ENCODE measurements at regions of chr12 and their contacts with region 1.

Region 1: GRCh38 chr12:6688999-6689882 is at the start of gene ZNF384:
- DNase-seq: peak; percentile 94 to 98 (median 95)
- H3K4me3 ChIP-seq: peak within 1 kb of the TSS; percentile 61
- H3K4me3 Mint-ChIP-seq: peak within 1 kb of the TSS; percentile 85 to 96 (median 94)
- H3K27ac ChIP-seq: peak within 1 kb of the TSS; percentile 82
- H3K27ac Mint-ChIP-seq: peak within 1 kb of the TSS; percentile 92 to 99 (median 99)
- H3K4me1 ChIP-seq: peaks cover 36% of the 10 kb centered on the region
- H3K4me1 Mint-ChIP-seq: peaks cover 50 to 63% (median 55%) of the 10 kb centered on the region in 3 donors
- H3K27me3 ChIP-seq: no peaks in the 10 kb centered on the region
- H3K27me3 Mint-ChIP-seq: peaks cover 0 to 1% of the 10 kb centered on the region in 2 donors
- total RNA-seq, gene ZNF384: 58.1 to 63.3 TPM

Region 2: GRCh38 chr12:6620137-6620884 is 68.9 kb before region 1 on chr12:
- CTCF ChIA-PET with region 1: interaction called, 4 read pairs
- POLR2A ChIA-PET with region 1: interaction called, 11 read pairs
- DNase-seq: peak in 2 of 5 donors; percentile 50 to 62
- H3K4me3 ChIP-seq: no peak overlapping the region
- H3K4me3 Mint-ChIP-seq: peak overlapping the region in 3 of 7 donors; percentile 27 to 71 (median 55)
- H3K27ac ChIP-seq: no peak overlapping the region
- H3K27ac Mint-ChIP-seq: peak overlapping the region in 4 of 8 donors; percentile 46 to 85 (median 77)
- H3K4me1 ChIP-seq: no peaks in the 10 kb centered on the region
- H3K4me1 Mint-ChIP-seq: peaks cover 6 to 38% (median 18%) of the 10 kb centered on the region in 3 donors
- H3K27me3 ChIP-seq: no peaks in the 10 kb centered on the region
- H3K27me3 Mint-ChIP-seq: no peaks in the 10 kb centered on the region

Region 3: DNA sequence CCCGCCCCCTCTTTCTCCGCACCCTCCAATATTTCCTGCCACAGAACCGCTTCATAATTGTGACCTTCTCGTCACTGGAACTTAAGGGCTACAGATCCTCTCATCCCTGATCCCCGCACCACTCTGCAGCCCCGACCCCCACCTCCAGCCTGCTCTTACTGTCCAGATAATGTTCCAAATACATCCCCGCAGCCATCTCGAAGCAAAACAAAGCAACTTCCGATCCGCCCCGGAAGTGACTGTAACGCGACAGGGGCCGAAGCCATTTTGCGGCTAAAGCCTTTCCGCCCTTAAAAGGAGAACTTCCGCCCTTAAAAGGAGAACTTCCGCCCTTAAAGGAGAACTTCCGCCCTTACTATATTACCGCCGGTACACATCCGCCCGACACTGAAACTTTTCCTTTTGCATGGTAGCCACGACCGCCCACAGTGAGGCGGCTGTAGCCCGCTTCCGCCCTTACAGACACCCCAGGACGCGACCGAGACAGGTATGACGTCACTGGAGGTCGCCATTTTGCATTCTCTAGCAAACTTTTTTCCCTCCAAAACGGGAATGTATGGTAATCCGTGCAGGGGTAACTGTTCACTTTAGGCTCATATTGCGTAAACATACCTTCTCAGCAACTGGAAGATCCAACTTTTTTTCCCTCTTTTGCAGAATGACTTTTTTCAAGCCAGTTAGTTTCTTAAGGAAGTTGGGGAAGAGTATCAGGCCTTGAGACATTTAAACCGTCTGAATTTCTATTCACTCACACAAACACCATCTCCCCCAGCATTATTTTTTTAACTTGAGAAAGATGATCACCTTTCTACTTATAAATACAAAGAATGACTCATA is 26.1 kb before region 1 on chr12 and contains the start of gene ING4:
- CTCF ChIA-PET with region 1: interaction called, 8 read pairs
- POLR2A ChIA-PET with region 1: interaction called, 16 read pairs
- DNase-seq: peak; percentile 91 to 99 (median 97)
- H3K4me3 ChIP-seq: peak within 1 kb of the TSS; percentile 76
- H3K4me3 Mint-ChIP-seq: peak within 1 kb of the TSS; percentile 90 to 98 (median 95)
- H3K27ac ChIP-seq: peak within 1 kb of the TSS; percentile 83
- H3K27ac Mint-ChIP-seq: peak within 1 kb of the TSS; percentile 88 to 99 (median 98)
- H3K4me1 ChIP-seq: peaks cover 20% of the 10 kb centered on the region
- H3K4me1 Mint-ChIP-seq: peaks cover 27 to 42% (median 34%) of the 10 kb centered on the region in 3 donors
- H3K27me3 ChIP-seq: no peaks in the 10 kb centered on the region
- H3K27me3 Mint-ChIP-seq: no peaks in the 10 kb centered on the region
- total RNA-seq, gene ING4: 17.4 to 18.5 TPM

Region 4: GRCh38 chr12:6708960-6709394 is 19.7 kb after region 1 on chr12:
- CTCF ChIA-PET with region 1: no interaction called
- POLR2A ChIA-PET with region 1: no interaction called
- DNase-seq: peak in 3 of 5 donors; percentile 7 to 64 (median 50)
- H3K4me3 ChIP-seq: no peak overlapping the region
- H3K4me3 Mint-ChIP-seq: peak overlapping the region; percentile 75 to 94 (median 80)
- H3K27ac ChIP-seq: no peak overlapping the region
- H3K27ac Mint-ChIP-seq: peak overlapping the region; percentile 12 to 96 (median 80)
- H3K4me1 ChIP-seq: no peaks in the 10 kb centered on the region
- H3K4me1 Mint-ChIP-seq: peaks cover 7 to 10% (median 8%) of the 10 kb centered on the region in 3 donors
- H3K27me3 ChIP-seq: no peaks in the 10 kb centered on the region
- H3K27me3 Mint-ChIP-seq: peaks cover 25 to 27% of the 10 kb centered on the region in 2 donors

Region 5: GRCh38 chr12:6752921-6753771 is 63.9 kb after region 1 on chr12 and contains the start of gene MLF2:
- CTCF ChIA-PET with region 1: interaction called, 7 read pairs
- POLR2A ChIA-PET with region 1: interaction called, 16 read pairs
- DNase-seq: peak; percentile 96 to 98 (median 97)
- H3K4me3 ChIP-seq: peak within 1 kb of the TSS; percentile 99
- H3K4me3 Mint-ChIP-seq: peak within 1 kb of the TSS; percentile 96 to 99 (median 97)
- H3K27ac ChIP-seq: peak within 1 kb of the TSS; percentile 98
- H3K27ac Mint-ChIP-seq: peak within 1 kb of the TSS; percentile 98 to 100 (median 99)
- H3K4me1 ChIP-seq: peaks cover 22% of the 10 kb centered on the region
- H3K4me1 Mint-ChIP-seq: peaks cover 24 to 30% (median 29%) of the 10 kb centered on the region in 3 donors
- H3K27me3 ChIP-seq: no peaks in the 10 kb centered on the region
- H3K27me3 Mint-ChIP-seq: no peaks in the 10 kb centered on the region
- total RNA-seq, gene MLF2: 141 to 146 TPM

Region 6: GRCh38 chr12:6851921-6852650 is 162.8 kb after region 1 on chr12 and contains the start of gene USP5:
- CTCF ChIA-PET with region 1: interaction called, 4 read pairs
- POLR2A ChIA-PET with region 1: interaction called, 20 read pairs
- DNase-seq: peak; percentile 97 to 99 (median 99)
- H3K4me3 ChIP-seq: peak within 1 kb of the TSS; percentile 97
- H3K4me3 Mint-ChIP-seq: peak within 1 kb of the TSS; percentile 86 to 99 (median 94)
- H3K27ac ChIP-seq: peak within 1 kb of the TSS; percentile 77
- H3K27ac Mint-ChIP-seq: peak within 1 kb of the TSS; percentile 99 to 100 (median 100)
- H3K4me1 ChIP-seq: peaks cover 18% of the 10 kb centered on the region
- H3K4me1 Mint-ChIP-seq: peaks cover 20 to 38% (median 20%) of the 10 kb centered on the region in 3 donors
- H3K27me3 ChIP-seq: no peaks in the 10 kb centered on the region
- H3K27me3 Mint-ChIP-seq: no peaks in the 10 kb centered on the region
- total RNA-seq, gene USP5: 154 TPM